ENCODE measurements at regions of chr1 and their contacts with region 1.

Region 1: GRCh38 chr1:160219062-160219929 is 14.1 kb downstream of the PEA15 start:
- DNase-seq: no peak
- H3K4me3 ChIP-seq: no peak overlapping the region
- H3K27ac ChIP-seq: no peak overlapping the region
- H3K4me1 ChIP-seq: no peaks in the 10 kb centered on the region
- H3K27me3 ChIP-seq: no peaks in the 10 kb centered on the region
- CTCF ChIP-seq: peak; percentile 35 to 66 (median 48)
- EP300 ChIP-seq: no peak
- POLR2A ChIP-seq: no peak
- RAD21 ChIP-seq: peak; percentile 66 to 80

Region 2: DNA sequence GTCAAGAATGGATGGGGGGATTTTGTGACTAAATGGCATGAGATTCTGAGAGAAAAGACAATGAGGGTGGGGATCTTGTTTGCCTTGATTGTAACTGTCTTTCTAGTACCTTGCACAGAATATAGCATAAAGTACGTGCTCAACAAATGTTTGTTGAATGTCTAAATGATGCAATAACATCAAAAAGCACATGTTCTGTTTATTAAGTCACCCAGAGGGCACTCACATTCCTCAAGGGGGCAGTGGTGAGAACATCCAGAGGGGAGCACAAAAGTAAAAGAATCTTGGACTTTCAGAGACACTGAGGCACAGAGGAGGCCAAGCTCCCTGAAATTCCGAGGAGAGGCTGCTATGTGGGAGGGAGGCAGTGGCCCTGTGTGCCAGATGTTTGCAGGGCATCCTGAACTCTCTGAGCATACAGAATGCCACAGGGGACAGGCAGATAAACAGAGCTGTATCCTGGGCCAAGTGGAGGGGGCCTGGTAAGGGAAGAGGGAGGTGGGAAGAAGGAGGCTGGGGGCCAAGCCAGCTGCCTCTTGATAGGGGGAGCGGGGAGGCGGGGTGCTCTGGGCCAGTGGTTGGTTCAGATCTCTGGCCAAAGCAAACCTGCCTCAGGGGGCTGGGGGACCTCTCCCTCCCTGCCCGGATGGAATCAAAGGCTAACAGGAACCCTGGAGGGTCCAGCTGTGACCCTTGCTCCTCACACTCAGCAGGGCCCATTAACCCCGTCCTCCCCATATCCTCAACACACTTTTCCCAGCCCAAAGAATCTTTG is 110.2 kb before region 1 on chr1:
- CTCF ChIA-PET with region 1: interaction called, 76 read pairs
- POLR2A ChIA-PET with region 1: no interaction called
- DNase-seq: peak in 1 of 2 experiments; percentile 69
- H3K4me3 ChIP-seq: no peak overlapping the region
- H3K27ac ChIP-seq: no peak overlapping the region
- H3K4me1 ChIP-seq: peaks cover 8 to 32% (median 20%) of the 10 kb centered on the region in 4 experiments
- H3K27me3 ChIP-seq: no peaks in the 10 kb centered on the region; a peak in 1 of 7 replicates
- CTCF ChIP-seq: peak; percentile 4 to 73 (median 44)
- EP300 ChIP-seq: peak in 1 of 2 experiments; percentile 49; a peak in 1 of 3 replicates
- POLR2A ChIP-seq: no peak
- RAD21 ChIP-seq: peak; percentile 24 to 35; a peak in 3 of 4 replicates

Region 3: DNA sequence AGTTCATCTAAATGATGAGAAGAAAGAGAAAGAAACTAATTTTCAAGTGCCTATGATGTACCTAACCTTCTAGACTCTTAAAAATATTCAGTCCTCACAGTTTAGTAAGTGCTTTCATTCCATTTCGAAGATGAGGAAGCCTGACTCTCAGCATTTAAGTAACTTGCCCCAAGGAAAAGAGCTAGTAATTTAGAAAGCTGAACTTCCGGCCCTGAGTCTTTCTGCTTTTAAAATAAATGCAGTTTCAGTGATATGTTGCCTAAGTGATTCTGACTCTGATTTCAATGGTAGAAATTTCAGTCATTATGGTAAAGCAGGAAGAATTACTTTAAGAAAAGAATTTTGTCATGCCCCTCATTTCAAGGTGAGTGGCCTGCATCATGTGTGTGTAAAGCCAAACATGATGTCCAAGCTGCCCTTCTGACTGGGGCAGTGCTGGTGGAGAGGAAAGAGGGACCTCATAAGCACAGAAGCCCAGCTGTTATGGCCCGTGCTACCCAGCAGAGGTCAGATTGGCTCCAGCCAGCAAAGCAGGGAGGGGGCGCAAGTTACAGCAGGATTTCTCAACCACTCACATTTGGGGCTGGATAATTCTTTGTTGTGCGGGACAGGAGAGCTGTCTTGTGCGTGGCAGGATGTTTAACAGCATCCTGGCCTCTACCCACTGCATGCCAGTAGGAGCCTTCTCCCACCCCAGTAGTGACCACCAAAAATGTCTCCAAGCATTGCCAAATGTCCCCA is 57.2 kb before region 1 on chr1:
- CTCF ChIA-PET with region 1: interaction called, 257 read pairs
- POLR2A ChIA-PET with region 1: interaction called, 11 read pairs
- DNase-seq: peak; percentile 54 to 73
- H3K4me3 ChIP-seq: no peak overlapping the region
- H3K27ac ChIP-seq: no peak overlapping the region
- H3K4me1 ChIP-seq: peaks cover 0 to 3% (median 1%) of the 10 kb centered on the region in 4 experiments; a peak in 3 of 7 replicates
- H3K27me3 ChIP-seq: no peaks in the 10 kb centered on the region; a peak in 2 of 7 replicates
- CTCF ChIP-seq: peak; percentile 87 to 98 (median 95)
- EP300 ChIP-seq: no peak
- POLR2A ChIP-seq: no peak
- RAD21 ChIP-seq: peak; percentile 93 to 96

Region 4: DNA sequence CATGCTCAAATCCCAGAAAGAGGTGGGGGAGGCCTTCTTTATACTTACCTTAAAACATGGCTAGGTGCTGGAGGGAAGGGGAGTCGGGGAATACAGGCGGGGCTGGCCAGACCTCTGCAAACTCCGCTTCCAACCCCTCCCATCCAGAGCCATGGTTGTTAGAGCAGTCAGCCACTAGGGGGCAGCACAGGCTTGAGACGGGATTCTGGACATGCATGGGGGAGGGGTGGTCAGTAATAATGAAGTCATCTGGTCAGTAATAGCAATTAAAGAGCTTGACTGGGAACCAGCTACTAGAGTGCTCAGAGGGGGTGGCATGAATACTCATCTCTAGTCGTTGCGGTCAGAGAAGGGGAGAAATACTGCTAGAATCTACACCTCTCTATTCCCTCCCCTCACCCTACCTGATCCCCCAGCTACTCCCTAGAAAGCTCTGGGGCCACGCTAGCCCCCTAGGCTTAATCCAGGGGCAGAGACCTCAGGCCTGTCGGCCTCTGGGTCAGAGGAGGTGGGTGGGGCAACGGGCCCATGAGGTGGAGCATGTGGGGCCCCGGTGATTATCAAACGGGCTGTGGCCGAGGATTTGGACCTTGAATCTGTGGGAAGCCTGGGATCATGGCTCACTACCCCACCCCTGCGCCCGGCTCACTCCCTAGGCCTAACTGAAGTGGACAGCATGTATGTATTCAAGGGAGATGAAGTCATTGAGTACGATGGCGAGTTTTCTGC is 26.0 kb before region 1 on chr1:
- CTCF ChIA-PET with region 1: interaction called, 103 read pairs
- POLR2A ChIA-PET with region 1: interaction called, 8 read pairs
- DNase-seq: peak; percentile 84 to 98
- H3K4me3 ChIP-seq: 0 out of 8 replicates have a peak overlapping the region, but pooled peaks of 1 of the 4 experiments have one; percentile 12
- H3K27ac ChIP-seq: no peak overlapping the region
- H3K4me1 ChIP-seq: peaks cover 3 to 26% (median 8%) of the 10 kb centered on the region in 4 experiments; a peak in 6 of 7 replicates
- H3K27me3 ChIP-seq: no peaks in the 10 kb centered on the region; a peak in 1 of 7 replicates
- CTCF ChIP-seq: peak; percentile 94 to 95 (median 94)
- EP300 ChIP-seq: no peak
- POLR2A ChIP-seq: no peak
- RAD21 ChIP-seq: peak; percentile 95 to 96

Region 5: DNA sequence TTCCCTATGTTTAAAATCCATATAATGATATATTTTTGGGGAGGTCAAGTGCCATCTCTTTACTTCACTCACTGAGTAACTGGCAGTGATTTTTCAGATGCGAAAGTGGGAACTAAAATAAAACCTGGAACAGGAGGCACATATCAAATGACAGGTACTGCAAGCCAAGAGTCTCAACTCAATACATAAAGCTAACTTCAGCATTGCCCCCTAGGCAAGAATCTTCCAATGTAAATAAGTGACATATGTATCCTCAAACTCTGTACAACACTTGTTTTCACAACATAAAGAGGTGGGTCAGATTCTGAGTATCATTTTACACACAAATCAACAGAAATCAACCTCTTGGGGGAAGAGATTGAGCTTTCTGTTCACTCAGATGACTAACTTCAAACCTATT is 24.9 kb after region 1 on chr1:
- CTCF ChIA-PET with region 1: interaction called, 21 read pairs
- POLR2A ChIA-PET with region 1: interaction called, 4 read pairs
- DNase-seq: no peak
- H3K4me3 ChIP-seq: no peak overlapping the region
- H3K27ac ChIP-seq: no peak overlapping the region
- H3K4me1 ChIP-seq: no peaks in the 10 kb centered on the region
- H3K27me3 ChIP-seq: no peaks in the 10 kb centered on the region
- CTCF ChIP-seq: no peak
- EP300 ChIP-seq: no peak
- POLR2A ChIP-seq: no peak
- RAD21 ChIP-seq: no peak

Region 6: GRCh38 chr1:160362168-160362957 is 143.1 kb after region 1 on chr1:
- CTCF ChIA-PET with region 1: no interaction called
- POLR2A ChIA-PET with region 1: no interaction called
- DNase-seq: no peak
- H3K4me3 ChIP-seq: no peak overlapping the region
- H3K27ac ChIP-seq: peak overlapping the region; percentile 8; the same call in 1 of the 2 replicates
- H3K4me1 ChIP-seq: peaks cover 3 to 8% (median 4%) of the 10 kb centered on the region in 4 experiments; a peak in 6 of 7 replicates
- H3K27me3 ChIP-seq: no peaks in the 10 kb centered on the region
- CTCF ChIP-seq: no peak
- EP300 ChIP-seq: no peak
- POLR2A ChIP-seq: no peak
- RAD21 ChIP-seq: no peak

Measured in H1 (cell line).